IMR-90 (cell line): ENCODE measurements at regions of chr12 and their contacts with region 1.

Region 1: DNA sequence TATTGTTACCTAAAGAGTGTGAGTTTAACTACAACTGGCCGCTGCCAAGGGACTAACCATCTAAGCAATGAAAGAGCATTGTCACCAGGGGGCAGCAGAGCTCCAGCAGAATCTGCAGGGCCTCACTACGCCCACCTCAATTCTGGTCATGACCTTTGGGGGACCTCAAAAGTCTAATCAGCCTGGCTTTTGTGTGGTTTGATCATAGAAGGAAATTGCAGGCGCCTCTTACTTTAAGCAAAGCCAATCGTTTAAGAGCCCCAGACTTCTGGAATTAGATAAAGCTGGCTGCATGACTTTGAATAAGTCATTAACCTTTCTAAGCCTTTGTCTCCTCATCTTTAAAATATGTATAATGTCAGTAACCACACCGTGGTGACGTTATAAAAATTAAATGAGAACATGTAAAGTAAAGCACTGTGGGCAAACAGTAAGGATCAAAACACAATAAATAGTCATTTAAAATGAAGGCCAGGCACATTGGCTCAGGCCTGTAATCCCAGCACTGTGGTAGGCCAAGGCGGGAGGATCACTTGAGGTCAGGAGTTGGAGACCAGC is 58.6 kb downstream of the TBX3 start:
- DNase-seq: peak; percentile 72
- ATAC-seq: peak; percentile 96
- H3K4me3 ChIP-seq: no peak overlapping the region
- H3K27ac ChIP-seq: no peak overlapping the region
- H3K4me1 ChIP-seq: no peaks in the 10 kb centered on the region
- H3K27me3 ChIP-seq: peaks cover 11% of the 10 kb centered on the region
- CTCF ChIP-seq: peak; percentile 87
- POLR2A ChIP-seq: no peak
- RAD21 ChIP-seq: peak; percentile 86

Region 2: GRCh38 chr12:113683574-113684384 is 941.6 kb before region 1 on chr12:
- CTCF ChIA-PET with region 1: no interaction called
- POLR2A ChIA-PET with region 1: interaction called, 13 read pairs
- dilution Hi-C with region 1: no loop called
- in situ Hi-C with region 1: no loop called
- intact Hi-C with region 1: no loop called
- DNase-seq: peak; percentile 33
- ATAC-seq: no peak
- H3K4me3 ChIP-seq: no peak overlapping the region
- H3K27ac ChIP-seq: no peak overlapping the region
- H3K4me1 ChIP-seq: no peaks in the 10 kb centered on the region
- H3K27me3 ChIP-seq: peaks cover 2% of the 10 kb centered on the region
- CTCF ChIP-seq: no peak
- POLR2A ChIP-seq: no peak
- RAD21 ChIP-seq: no peak

Region 3: DNA sequence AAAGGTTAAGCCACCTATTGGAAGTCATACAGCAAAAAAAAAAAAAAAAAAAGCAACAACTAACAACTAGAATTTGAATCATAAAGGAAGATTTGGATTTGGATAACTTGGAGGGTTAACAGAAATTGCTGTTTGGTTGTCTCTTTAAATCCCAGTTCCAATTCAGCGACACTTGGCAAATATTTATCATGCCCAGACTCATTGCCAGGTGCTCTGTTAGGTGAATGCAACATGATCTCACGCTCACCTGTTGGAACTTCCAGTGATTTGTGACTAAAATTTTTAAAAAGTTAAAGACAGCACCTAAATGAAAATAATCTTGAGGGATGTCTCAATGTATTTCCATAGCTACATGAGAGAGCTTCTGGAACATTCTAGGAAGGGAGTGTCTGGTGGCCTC is 45.1 kb before region 1 on chr12:
- CTCF ChIA-PET with region 1: no interaction called
- POLR2A ChIA-PET with region 1: no interaction called
- dilution Hi-C with region 1: no loop called
- in situ Hi-C with region 1: no loop called
- intact Hi-C with region 1: no loop called
- DNase-seq: no peak
- ATAC-seq: no peak
- H3K4me3 ChIP-seq: no peak overlapping the region
- H3K27ac ChIP-seq: no peak overlapping the region
- H3K4me1 ChIP-seq: no peaks in the 10 kb centered on the region
- H3K27me3 ChIP-seq: no peaks in the 10 kb centered on the region; the same call in none of the 2 replicates
- CTCF ChIP-seq: no peak
- POLR2A ChIP-seq: no peak
- RAD21 ChIP-seq: no peak

Region 4: DNA sequence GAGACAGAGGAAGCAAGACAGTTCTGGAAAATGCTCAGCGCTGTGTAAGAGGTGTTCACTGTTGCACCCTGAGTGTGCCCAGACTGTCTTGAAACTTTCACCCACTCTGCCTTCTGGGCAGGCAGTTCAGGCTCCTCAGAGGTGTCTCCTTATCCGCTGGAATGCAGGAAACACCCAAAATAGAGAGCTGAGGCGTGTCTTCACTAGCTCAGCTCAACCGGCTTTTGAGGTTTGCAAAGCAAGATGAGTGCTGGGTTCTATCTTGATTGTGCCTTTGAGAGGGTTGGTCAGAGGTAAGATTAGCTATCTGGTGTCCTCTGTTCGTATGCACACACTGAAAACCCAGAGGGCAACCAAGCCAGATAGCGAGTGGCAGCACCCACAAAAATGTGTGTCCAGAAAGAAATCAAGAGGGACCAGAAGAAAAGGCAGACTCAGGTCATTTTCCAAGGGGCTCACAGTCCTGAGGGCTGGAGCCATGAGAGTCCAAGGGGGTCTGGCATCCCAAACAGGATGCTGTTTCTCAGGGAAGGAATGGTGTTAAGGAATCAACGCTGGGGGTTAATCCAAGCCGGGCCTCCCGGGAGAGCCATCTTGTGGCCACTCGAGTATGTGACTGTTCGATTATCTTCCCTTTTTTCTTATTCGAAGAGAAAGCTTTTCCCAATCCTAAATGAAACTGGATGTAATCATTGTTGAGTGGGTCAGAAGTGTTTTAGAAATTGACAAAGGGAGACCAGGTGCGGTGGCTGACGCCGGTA is 11.5 kb after region 1 on chr12:
- CTCF ChIA-PET with region 1: interaction called, 10 read pairs
- POLR2A ChIA-PET with region 1: no interaction called
- dilution Hi-C with region 1: no loop called
- in situ Hi-C with region 1: no loop called
- intact Hi-C with region 1: no loop called
- DNase-seq: peak; percentile 19
- ATAC-seq: peak; percentile 84
- H3K4me3 ChIP-seq: no peak overlapping the region
- H3K27ac ChIP-seq: no peak overlapping the region
- H3K4me1 ChIP-seq: no peaks in the 10 kb centered on the region
- H3K27me3 ChIP-seq: peaks cover 1% of the 10 kb centered on the region; the same call in 1 of the 2 replicates
- CTCF ChIP-seq: peak; percentile 58
- POLR2A ChIP-seq: no peak
- RAD21 ChIP-seq: peak; percentile 41; the same call in 1 of the 2 replicates

Region 5: GRCh38 chr12:115916910-115917668 is 1291.7 kb after region 1 on chr12:
- CTCF ChIA-PET with region 1: interaction called, 11 read pairs
- POLR2A ChIA-PET with region 1: no interaction called
- dilution Hi-C with region 1: no loop called
- in situ Hi-C with region 1: loop called (anchors 5 kb)
- intact Hi-C with region 1: loop called (anchors 1 kb)
- DNase-seq: no peak
- ATAC-seq: peak; percentile 78
- H3K4me3 ChIP-seq: no peak overlapping the region
- H3K27ac ChIP-seq: no peak overlapping the region
- H3K4me1 ChIP-seq: peaks cover 3% of the 10 kb centered on the region
- H3K27me3 ChIP-seq: peaks cover 28% of the 10 kb centered on the region
- CTCF ChIP-seq: peak; percentile 83
- POLR2A ChIP-seq: no peak
- RAD21 ChIP-seq: peak; percentile 88

Region 6: DNA sequence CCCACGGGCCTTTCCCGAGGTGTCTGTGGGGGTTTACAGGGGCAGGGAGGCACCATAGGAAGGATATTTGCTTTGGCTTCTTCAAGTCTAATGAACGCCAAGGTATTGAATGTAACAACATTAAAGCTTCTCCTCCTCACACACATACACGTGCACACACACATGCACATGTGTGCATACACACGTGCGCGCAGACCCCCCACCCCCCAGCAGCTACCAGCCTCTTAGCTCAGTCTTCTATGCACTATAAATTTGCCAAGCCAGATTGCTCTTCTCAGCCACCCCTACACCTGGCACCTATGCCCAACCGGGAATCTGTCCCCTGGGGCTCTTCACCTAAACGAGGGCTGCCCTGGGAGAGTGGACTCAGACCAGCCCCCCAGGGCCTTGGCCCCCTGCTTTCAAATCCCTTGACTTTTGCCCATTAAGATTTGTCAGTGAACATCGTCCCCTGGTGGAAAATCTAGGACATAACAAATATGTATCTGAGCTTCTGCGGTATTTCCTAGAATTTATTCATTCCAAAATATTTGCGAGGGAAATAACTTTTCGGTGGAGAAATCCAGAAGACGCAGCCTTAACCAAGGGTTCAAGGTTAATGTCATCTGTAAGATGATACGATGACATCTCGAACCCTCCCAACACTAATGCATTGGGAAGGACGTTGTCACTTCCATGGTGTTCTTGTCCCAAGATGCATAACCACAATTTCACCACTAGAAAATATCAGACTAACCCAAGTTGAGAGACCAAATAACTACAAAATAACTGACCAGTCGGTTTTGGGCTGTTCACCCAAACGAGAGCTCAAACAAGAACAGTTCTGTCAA is 1321.7 kb after region 1 on chr12:
- CTCF ChIA-PET with region 1: no interaction called
- POLR2A ChIA-PET with region 1: no interaction called
- dilution Hi-C with region 1: no loop called
- in situ Hi-C with region 1: no loop called
- intact Hi-C with region 1: loop called (anchors 1 kb)
- DNase-seq: peak; percentile 10
- ATAC-seq: peak; percentile 42; the same call in 1 of the 2 replicates
- H3K4me3 ChIP-seq: no peak overlapping the region
- H3K27ac ChIP-seq: no peak overlapping the region
- H3K4me1 ChIP-seq: no peaks in the 10 kb centered on the region; the same call in 1 of the 2 replicates
- H3K27me3 ChIP-seq: no peaks in the 10 kb centered on the region
- CTCF ChIP-seq: peak; percentile 58
- POLR2A ChIP-seq: no peak
- RAD21 ChIP-seq: peak; percentile 45